T-cell (primary cell): ENCODE measurements at regions of chr2 and their contacts with region 1.

Region 1: DNA sequence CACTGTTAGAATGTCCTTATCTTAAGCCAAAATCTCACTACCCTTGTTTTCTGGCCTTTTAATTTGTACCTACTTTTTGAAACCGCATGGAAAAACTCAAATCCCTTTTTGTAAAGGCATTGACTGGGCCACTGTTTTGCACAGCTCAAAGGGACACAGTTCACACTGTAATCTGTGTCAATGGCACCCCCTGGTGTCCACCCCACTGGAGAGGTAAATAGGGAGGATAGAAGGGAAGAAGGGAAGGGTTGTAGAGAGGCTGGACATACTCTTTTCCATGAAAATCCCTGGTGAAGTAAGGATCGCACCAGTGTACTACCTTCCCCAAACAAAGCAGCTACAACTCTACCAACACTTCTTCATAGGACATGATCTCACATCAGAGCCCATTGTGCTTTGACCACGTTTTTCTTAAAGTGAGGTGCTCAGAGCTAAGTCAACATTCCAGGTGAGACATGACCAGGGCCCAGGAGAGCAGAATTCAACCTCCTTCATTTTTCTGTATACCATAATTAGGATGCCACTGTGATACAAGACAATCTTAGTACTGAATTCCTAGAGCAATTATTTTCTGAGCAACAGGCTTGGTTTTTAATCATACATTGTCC is 92.4 kb upstream of the RMDN2 start:
- DNase-seq: peak; percentile 47 to 87 (median 79)
- ATAC-seq: peak; percentile 75 to 87 (median 82)
- H3K4me3 ChIP-seq: no peak overlapping the region
- H3K4me3 Mint-ChIP-seq: no peak overlapping the region
- H3K27ac ChIP-seq: no peak overlapping the region
- H3K27ac Mint-ChIP-seq: no peak overlapping the region
- H3K4me1 ChIP-seq: peaks cover 2 to 4% of the 10 kb centered on the region in 2 experiments
- H3K4me1 Mint-ChIP-seq: peaks cover 13 to 20% (median 14%) of the 10 kb centered on the region in 3 donors
- H3K27me3 ChIP-seq: no peaks in the 10 kb centered on the region
- H3K27me3 Mint-ChIP-seq: no peaks in the 10 kb centered on the region

Region 2: GRCh38 chr2:37389989-37390765 is 442.5 kb before region 1 on chr2:
- CTCF ChIA-PET with region 1: interaction called, 37 to 53 read pairs
- POLR2A ChIA-PET with region 1: no interaction called
- DNase-seq: peak in 34 of 35 experiments; percentile 12 to 85 (median 39)
- ATAC-seq: peak; percentile 96 to 99 (median 98)
- H3K4me3 ChIP-seq: no peak overlapping the region
- H3K4me3 Mint-ChIP-seq: peak overlapping the region in 1 of 3 donors; percentile 35
- H3K27ac ChIP-seq: peak overlapping the region; percentile 71
- H3K27ac Mint-ChIP-seq: no peak overlapping the region
- H3K4me1 ChIP-seq: peaks cover 19 to 22% of the 10 kb centered on the region in 2 experiments
- H3K4me1 Mint-ChIP-seq: peaks cover 0 to 4% (median 0%) of the 10 kb centered on the region in 3 donors
- H3K27me3 ChIP-seq: peaks cover 0 to 4% of the 10 kb centered on the region in 2 experiments
- H3K27me3 Mint-ChIP-seq: no peaks in the 10 kb centered on the region

Region 3: DNA sequence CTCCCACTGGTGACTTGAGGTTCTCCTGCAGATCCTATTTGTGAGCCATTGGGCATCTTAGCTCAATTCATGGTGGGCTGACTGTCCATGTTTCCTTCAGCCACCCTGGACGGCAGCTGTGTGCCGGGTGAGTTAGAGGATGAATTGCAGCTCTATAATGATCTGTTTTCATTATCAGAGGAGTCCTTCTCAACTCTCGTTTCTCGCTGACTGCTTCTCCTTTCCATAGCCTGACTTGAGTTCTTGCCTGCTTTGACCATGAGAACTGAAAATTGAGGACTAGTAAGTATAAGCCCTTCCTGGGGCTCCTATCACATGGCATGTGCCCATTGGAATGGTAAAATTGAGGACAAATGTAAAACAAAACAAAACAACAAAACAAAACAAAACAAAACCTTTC is 283.1 kb before region 1 on chr2:
- CTCF ChIA-PET with region 1: interaction called in 1 of 2 experiments, 10 read pairs
- POLR2A ChIA-PET with region 1: no interaction called
- DNase-seq: no peak
- ATAC-seq: no peak
- H3K4me3 ChIP-seq: no peak overlapping the region
- H3K4me3 Mint-ChIP-seq: no peak overlapping the region
- H3K27ac ChIP-seq: no peak overlapping the region
- H3K27ac Mint-ChIP-seq: no peak overlapping the region
- H3K4me1 ChIP-seq: no peaks in the 10 kb centered on the region
- H3K4me1 Mint-ChIP-seq: peaks cover 9 to 21% (median 18%) of the 10 kb centered on the region in 3 donors
- H3K27me3 ChIP-seq: no peaks in the 10 kb centered on the region
- H3K27me3 Mint-ChIP-seq: no peaks in the 10 kb centered on the region

Region 4: GRCh38 chr2:37782721-37783371 is 49.8 kb before region 1 on chr2:
- CTCF ChIA-PET with region 1: no interaction called
- POLR2A ChIA-PET with region 1: no interaction called
- DNase-seq: no peak
- ATAC-seq: no peak
- H3K4me3 ChIP-seq: no peak overlapping the region
- H3K4me3 Mint-ChIP-seq: no peak overlapping the region
- H3K27ac ChIP-seq: no peak overlapping the region
- H3K27ac Mint-ChIP-seq: no peak overlapping the region
- H3K4me1 ChIP-seq: no peaks in the 10 kb centered on the region
- H3K4me1 Mint-ChIP-seq: no peaks in the 10 kb centered on the region
- H3K27me3 ChIP-seq: no peaks in the 10 kb centered on the region
- H3K27me3 Mint-ChIP-seq: peaks cover 0 to 1% of the 10 kb centered on the region in 2 donors

Region 5: GRCh38 chr2:37851828-37852584 is 19.3 kb after region 1 on chr2:
- CTCF ChIA-PET with region 1: interaction called, 4 to 12 read pairs
- POLR2A ChIA-PET with region 1: interaction called in 1 of 2 experiments, 4 read pairs
- DNase-seq: peak in 2 of 35 experiments; percentile 4 to 66
- ATAC-seq: peak; percentile 39 to 91 (median 54)
- H3K4me3 ChIP-seq: no peak overlapping the region
- H3K4me3 Mint-ChIP-seq: peak overlapping the region; percentile 4 to 57 (median 45)
- H3K27ac ChIP-seq: peak overlapping the region; percentile 79
- H3K27ac Mint-ChIP-seq: peak overlapping the region; percentile 91 to 96
- H3K4me1 ChIP-seq: peaks cover 0 to 17% of the 10 kb centered on the region in 2 experiments
- H3K4me1 Mint-ChIP-seq: peaks cover 13 to 24% (median 20%) of the 10 kb centered on the region in 3 donors
- H3K27me3 ChIP-seq: peaks cover 0 to 5% of the 10 kb centered on the region in 2 experiments
- H3K27me3 Mint-ChIP-seq: no peaks in the 10 kb centered on the region

Region 6: DNA sequence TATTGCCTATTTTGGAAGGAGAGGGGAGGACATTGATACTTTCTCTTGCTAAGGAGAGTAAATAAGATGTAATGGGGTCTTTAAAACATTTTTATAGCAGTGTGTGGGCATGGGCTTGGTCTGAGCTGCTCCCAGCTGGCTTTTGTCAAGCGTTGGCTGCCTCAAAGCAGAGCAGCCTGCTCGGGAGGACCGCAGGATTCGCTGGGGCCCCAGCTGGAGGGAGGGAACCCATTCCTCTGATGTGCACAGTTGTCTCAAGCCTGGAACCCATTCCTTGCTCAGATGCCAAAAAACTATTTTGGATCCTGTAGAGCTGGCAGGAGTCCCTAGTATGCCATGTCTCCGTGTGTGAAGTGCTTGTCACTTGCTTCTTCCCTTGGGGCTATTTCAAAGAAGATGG is 32.9 kb after region 1 on chr2:
- CTCF ChIA-PET with region 1: no interaction called
- POLR2A ChIA-PET with region 1: no interaction called
- DNase-seq: no peak
- ATAC-seq: no peak
- H3K4me3 ChIP-seq: no peak overlapping the region
- H3K4me3 Mint-ChIP-seq: no peak overlapping the region
- H3K27ac ChIP-seq: no peak overlapping the region
- H3K27ac Mint-ChIP-seq: no peak overlapping the region
- H3K4me1 ChIP-seq: no peaks in the 10 kb centered on the region
- H3K4me1 Mint-ChIP-seq: no peaks in the 10 kb centered on the region
- H3K27me3 ChIP-seq: peaks cover 0 to 16% of the 10 kb centered on the region in 2 experiments
- H3K27me3 Mint-ChIP-seq: peaks cover 31 to 32% of the 10 kb centered on the region in 2 donors

Region 7: GRCh38 chr2:37877457-37878315 is 45.0 kb after region 1 on chr2:
- CTCF ChIA-PET with region 1: interaction called, 3 to 14 read pairs
- POLR2A ChIA-PET with region 1: no interaction called
- DNase-seq: peak in 5 of 35 experiments; percentile 12 to 78 (median 15)
- ATAC-seq: peak; percentile 62 to 81 (median 67)
- H3K4me3 ChIP-seq: no peak overlapping the region
- H3K4me3 Mint-ChIP-seq: no peak overlapping the region
- H3K27ac ChIP-seq: no peak overlapping the region
- H3K27ac Mint-ChIP-seq: no peak overlapping the region
- H3K4me1 ChIP-seq: no peaks in the 10 kb centered on the region
- H3K4me1 Mint-ChIP-seq: peaks cover 0 to 6% (median 2%) of the 10 kb centered on the region in 3 donors
- H3K27me3 ChIP-seq: peaks cover 0 to 15% of the 10 kb centered on the region in 2 experiments
- H3K27me3 Mint-ChIP-seq: peaks cover 17% of the 10 kb centered on the region in 2 donors